PC-3 (cell line): ENCODE measurements at regions of chr13 and their contacts with region 1.

Region 1: GRCh38 chr13:73754727-73755292 is 379.4 kb downstream of the KLF12 start:
- DNase-seq: peak; percentile 85
- ATAC-seq: peak; percentile 79
- H3K4me3 ChIP-seq: no peak overlapping the region
- H3K27ac ChIP-seq: no peak overlapping the region
- H3K4me1 ChIP-seq: peaks cover 8% of the 10 kb centered on the region
- H3K27me3 ChIP-seq: no peaks in the 10 kb centered on the region
- CTCF ChIP-seq: peak; percentile 72

Region 2: GRCh38 chr13:73835138-73835721 is 80.4 kb after region 1 on chr13:
- CTCF ChIA-PET with region 1: no interaction called
- POLR2A ChIA-PET with region 1: no interaction called
- intact Hi-C with region 1: loop called (anchors 10 kb)
- DNase-seq: peak; percentile 67
- ATAC-seq: peak; percentile 27; the same call in 1 of the 2 replicates
- H3K4me3 ChIP-seq: no peak overlapping the region
- H3K27ac ChIP-seq: no peak overlapping the region
- H3K4me1 ChIP-seq: peaks cover 22% of the 10 kb centered on the region
- H3K27me3 ChIP-seq: no peaks in the 10 kb centered on the region
- CTCF ChIP-seq: peak; percentile 68

Region 3: DNA sequence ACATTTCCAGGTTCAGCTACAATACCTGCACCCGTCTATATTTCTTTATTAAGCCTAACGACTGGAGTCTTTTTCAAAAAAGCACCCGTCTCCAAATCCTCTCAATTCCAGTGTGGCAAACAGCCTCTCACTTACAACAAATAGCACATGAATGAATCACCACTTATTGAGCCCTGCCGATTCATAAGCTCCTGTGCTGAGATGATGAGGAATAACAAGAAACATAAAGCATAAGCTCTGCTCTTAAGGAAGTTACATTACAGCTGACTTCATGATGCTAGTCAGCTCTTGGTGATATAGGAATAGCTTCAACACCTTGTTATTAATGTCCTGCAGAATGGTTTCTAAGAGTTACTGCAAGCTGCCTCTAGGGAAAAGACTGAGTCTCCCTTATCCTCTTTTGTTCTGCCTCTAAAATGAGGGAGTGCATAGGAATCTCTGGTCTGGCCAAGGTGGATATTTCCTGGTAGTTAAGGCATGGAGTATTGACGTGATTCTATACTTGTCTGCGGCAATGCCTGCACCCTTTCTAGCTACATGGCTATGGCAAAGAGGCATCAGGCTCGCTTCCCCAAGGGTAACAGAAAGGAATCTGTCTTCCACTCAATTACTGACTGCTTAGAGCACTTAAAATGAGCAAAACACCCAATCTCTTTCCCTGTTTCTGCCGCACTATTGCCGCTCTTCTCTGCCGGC is 183.7 kb after region 1 on chr13:
- CTCF ChIA-PET with region 1: interaction called, 6 read pairs
- POLR2A ChIA-PET with region 1: no interaction called
- intact Hi-C with region 1: loop called (anchors 10 kb)
- DNase-seq: peak; percentile 75
- ATAC-seq: peak; percentile 78
- H3K4me3 ChIP-seq: peak overlapping the region; percentile 32; the same call in 1 of the 2 replicates
- H3K27ac ChIP-seq: peak overlapping the region; percentile 43
- H3K4me1 ChIP-seq: peaks cover 46% of the 10 kb centered on the region
- H3K27me3 ChIP-seq: no peaks in the 10 kb centered on the region
- CTCF ChIP-seq: no peak

Region 4: DNA sequence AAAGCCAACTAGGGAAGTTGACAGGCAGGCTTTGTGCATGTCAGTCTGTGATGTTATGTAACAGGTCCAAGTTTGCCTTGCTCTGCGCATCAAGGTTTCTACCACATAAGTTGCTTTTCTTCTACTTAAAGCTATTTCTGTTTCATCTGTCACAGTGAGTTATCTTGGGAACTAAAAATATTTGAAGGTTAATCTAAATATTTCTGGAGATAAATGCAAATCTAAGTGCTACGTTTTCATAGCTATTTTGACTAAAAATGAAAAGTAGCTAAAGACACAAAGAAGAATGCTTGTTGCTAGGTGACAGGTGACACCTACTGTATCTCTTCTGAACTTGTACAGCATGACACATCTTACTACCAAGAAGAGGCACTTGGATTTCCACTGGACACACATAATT is 243.8 kb after region 1 on chr13:
- CTCF ChIA-PET with region 1: no interaction called
- POLR2A ChIA-PET with region 1: no interaction called
- intact Hi-C with region 1: no loop called
- DNase-seq: no peak
- ATAC-seq: no peak
- H3K4me3 ChIP-seq: no peak overlapping the region
- H3K27ac ChIP-seq: no peak overlapping the region
- H3K4me1 ChIP-seq: no peaks in the 10 kb centered on the region
- H3K27me3 ChIP-seq: no peaks in the 10 kb centered on the region
- CTCF ChIP-seq: no peak

Region 5: GRCh38 chr13:74287724-74288169 is 532.9 kb after region 1 on chr13:
- CTCF ChIA-PET with region 1: no interaction called
- POLR2A ChIA-PET with region 1: no interaction called
- intact Hi-C with region 1: loop called (anchors 2 kb)
- DNase-seq: peak; percentile 40
- ATAC-seq: peak; percentile 23
- H3K4me3 ChIP-seq: no peak overlapping the region
- H3K27ac ChIP-seq: no peak overlapping the region
- H3K4me1 ChIP-seq: peaks cover 22% of the 10 kb centered on the region
- H3K27me3 ChIP-seq: no peaks in the 10 kb centered on the region
- CTCF ChIP-seq: no peak

Region 6: DNA sequence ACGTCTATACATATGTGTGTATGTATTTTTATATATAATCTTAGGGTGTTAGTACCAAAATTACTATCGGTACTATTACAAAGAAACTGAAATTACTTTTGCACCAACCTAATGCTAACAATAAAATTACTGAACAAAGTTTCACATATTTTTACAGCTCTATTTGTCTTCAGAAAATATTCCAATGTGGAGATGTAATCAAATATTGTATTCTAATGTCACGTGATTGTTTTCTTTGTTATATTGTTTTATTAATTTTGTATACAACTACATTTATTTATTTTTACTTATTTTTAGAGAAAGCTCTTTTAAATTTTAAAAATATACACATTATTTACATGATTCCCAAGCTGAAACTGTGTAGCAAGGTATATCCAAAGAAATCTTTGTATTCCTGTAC is 606.5 kb after region 1 on chr13:
- CTCF ChIA-PET with region 1: no interaction called
- POLR2A ChIA-PET with region 1: no interaction called
- intact Hi-C with region 1: no loop called
- DNase-seq: no peak
- ATAC-seq: no peak
- H3K4me3 ChIP-seq: no peak overlapping the region
- H3K27ac ChIP-seq: no peak overlapping the region
- H3K4me1 ChIP-seq: no peaks in the 10 kb centered on the region
- H3K27me3 ChIP-seq: no peaks in the 10 kb centered on the region
- CTCF ChIP-seq: no peak